ENCODE measurements at regions of chr9 and their contacts with region 1.

Region 1: GRCh38 chr9:17134396-17135294 is at the start of gene CNTLN:
- DNase-seq: peak; percentile 48
- H3K4me3 ChIP-seq: peak within 1 kb of the TSS; percentile 85
- H3K27me3 ChIP-seq: no peaks in the 10 kb centered on the region
- CTCF ChIP-seq: no peak
- polyA plus RNA-seq, gene CNTLN: 1.9 and 3.9 TPM in 2 replicates

Region 2: DNA sequence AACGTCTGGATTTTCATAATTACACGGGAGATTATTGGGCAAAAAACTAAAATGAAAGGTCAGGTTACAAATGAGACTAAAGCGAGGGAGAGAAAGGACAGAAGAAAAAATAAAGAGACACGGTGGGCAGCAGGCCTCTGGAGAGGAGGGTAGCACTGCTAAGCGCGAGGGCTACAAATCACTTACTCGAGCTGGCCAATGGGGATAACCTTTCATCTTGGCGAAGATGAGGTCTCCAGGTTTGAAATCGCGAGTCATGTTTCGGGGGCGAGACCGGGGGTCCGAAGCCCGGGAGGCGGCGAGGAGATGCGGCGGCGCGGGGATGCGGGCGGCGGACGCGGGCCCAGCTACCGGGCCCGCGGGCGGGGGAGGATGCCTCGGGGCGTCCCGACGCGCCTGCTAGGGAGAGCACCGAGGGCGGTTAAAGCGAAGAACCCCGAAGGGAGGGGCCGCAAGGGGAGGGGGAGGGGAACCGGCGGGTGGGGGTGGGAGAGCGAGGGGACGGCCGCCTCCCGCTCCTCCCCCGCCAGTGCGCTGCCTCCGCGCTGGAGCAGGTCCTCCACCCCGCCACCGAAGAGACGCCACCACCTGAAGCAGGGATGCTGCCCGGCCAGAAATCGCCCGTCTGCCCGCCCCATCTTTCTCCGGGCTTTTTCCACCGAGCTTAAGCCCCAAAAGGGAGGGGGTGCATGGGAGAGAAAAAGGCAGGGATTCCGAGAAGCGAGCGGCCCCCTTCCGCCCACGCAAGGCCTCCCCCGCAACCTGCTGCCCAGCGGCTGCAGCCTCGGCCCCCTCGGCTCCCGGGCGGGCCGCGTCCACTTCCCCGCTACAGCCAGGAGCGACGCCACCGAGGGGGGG is 1624.5 kb before region 1 on chr9:
- CTCF ChIA-PET with region 1: no interaction called
- POLR2A ChIA-PET with region 1: interaction called, 16 read pairs
- DNase-seq: no peak
- H3K4me3 ChIP-seq: peak overlapping the region; percentile 99
- H3K27me3 ChIP-seq: no peaks in the 10 kb centered on the region
- CTCF ChIP-seq: no peak

Region 3: GRCh38 chr9:17159469-17159868 is 24.8 kb after region 1 on chr9:
- CTCF ChIA-PET with region 1: no interaction called
- POLR2A ChIA-PET with region 1: no interaction called
- DNase-seq: no peak
- H3K4me3 ChIP-seq: no peak overlapping the region
- H3K27me3 ChIP-seq: no peaks in the 10 kb centered on the region
- CTCF ChIP-seq: no peak

Region 4: GRCh38 chr9:17171309-17172094 is 36.9 kb after region 1 on chr9:
- CTCF ChIA-PET with region 1: no interaction called
- POLR2A ChIA-PET with region 1: no interaction called
- DNase-seq: no peak
- H3K4me3 ChIP-seq: no peak overlapping the region
- H3K27me3 ChIP-seq: no peaks in the 10 kb centered on the region
- CTCF ChIP-seq: no peak

Measured in BJ (cell line).